ENCODE measurements at regions of chr2 and their contacts with region 1.

Region 1: GRCh38 chr2:227406177-227407031 is 18.7 kb upstream of the SCYGR1 start:
- DNase-seq: peak; percentile 84
- H3K4me3 ChIP-seq: peak overlapping the region; percentile 1; the same call in 1 of the 2 replicates
- CTCF ChIP-seq: peak; percentile 62

Region 2: GRCh38 chr2:227363756-227364155 is 42.6 kb before region 1 on chr2:
- CTCF ChIA-PET with region 1: no interaction called
- POLR2A ChIA-PET with region 1: no interaction called
- DNase-seq: no peak
- H3K4me3 ChIP-seq: no peak overlapping the region
- CTCF ChIP-seq: no peak

Region 3: DNA sequence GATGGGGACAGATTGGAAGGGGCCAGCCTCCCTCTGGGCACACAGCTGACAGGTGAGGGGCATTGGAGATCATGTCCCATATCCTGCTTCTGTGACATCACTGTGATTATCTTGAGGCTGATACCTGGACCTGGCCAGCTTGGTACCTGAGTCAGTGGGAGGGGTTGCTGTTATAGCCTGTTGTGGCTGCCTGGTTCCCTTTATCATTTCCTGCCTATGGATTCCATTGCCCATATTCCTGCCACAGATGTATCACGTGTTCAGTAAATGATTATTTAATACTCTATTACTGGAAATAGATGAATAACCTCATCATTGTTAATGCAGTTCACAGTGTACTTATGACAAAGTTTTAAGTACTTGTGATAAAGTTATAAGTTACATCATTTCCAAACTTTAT is 10.8 kb before region 1 on chr2:
- CTCF ChIA-PET with region 1: interaction called, 15 read pairs
- POLR2A ChIA-PET with region 1: no interaction called
- DNase-seq: no peak
- H3K4me3 ChIP-seq: no peak overlapping the region
- CTCF ChIP-seq: no peak

Region 4: DNA sequence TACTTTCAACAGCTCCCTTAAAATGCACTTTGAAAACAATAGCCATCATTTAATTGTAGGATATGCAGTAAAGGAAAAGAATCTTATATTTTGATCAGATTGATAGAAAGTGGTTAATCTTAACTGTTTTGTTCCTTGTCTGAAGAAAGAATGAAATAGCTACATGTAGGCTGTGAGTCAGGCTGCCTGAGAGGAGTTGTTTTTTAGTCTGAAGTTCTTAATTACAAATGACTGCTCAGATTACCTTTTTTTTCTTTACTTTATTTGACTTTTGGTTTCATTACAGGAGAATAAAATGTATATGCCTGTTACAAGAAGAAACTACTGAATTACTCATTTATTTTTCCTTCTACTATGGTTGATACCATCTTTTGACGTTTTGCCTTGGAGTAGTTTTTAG is 122.4 kb after region 1 on chr2:
- CTCF ChIA-PET with region 1: no interaction called
- POLR2A ChIA-PET with region 1: no interaction called
- DNase-seq: no peak
- H3K4me3 ChIP-seq: no peak overlapping the region
- CTCF ChIP-seq: no peak